ENCODE measurements at regions of chr12 and their contacts with region 1.

Region 1: GRCh38 chr12:44930972-44931600 is 55.0 kb upstream of the NELL2 start:
- DNase-seq: no peak
- H3K4me3 ChIP-seq: no peak overlapping the region
- H3K27ac ChIP-seq: no peak overlapping the region
- H3K4me1 ChIP-seq: no peaks in the 10 kb centered on the region
- H3K27me3 ChIP-seq: no peaks in the 10 kb centered on the region
- CTCF ChIP-seq: peak; percentile 40 to 70 (median 54)
- POLR2A ChIP-seq: no peak

Region 2: DNA sequence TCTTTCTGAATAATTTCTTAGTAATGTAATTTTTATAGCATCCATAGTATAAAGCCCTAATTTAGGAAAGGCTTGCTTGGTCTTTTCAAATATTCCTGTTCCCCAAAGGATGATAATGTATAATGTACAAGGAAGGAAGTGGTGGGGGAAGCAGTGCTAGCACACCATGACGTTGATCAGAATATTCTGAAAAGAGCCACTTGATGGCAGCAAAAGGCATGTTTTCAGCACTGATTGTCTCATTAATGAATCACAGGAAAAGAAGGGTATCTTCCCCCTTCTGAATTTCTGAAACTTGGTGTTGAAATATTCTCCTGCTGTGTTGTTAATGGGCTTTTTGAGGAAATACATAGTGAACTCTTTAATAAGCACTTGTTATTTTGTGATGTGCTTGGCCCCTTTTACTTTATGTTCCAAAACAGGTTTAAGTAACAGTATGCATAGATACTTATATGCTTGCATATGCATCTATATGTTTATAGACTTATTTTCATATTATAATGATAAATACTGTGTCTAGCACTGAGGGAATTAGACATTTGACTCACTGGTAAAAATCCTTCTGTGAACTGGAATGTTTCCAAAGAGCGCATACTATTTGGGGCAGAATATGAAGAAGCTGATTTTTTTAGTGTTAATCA is 973.2 kb before region 1 on chr12:
- intact Hi-C with region 1: loop called in 1 of 2 experiments (anchors 5 kb)
- DNase-seq: peak in 4 of 7 donors; percentile 15 to 33 (median 29)
- H3K4me3 ChIP-seq: no peak overlapping the region
- H3K27ac ChIP-seq: no peak overlapping the region
- H3K4me1 ChIP-seq: no peaks in the 10 kb centered on the region
- H3K27me3 ChIP-seq: no peaks in the 10 kb centered on the region
- CTCF ChIP-seq: peak; percentile 12 to 67 (median 54)
- POLR2A ChIP-seq: no peak

Measured in adrenal gland (tissue), 19 donors.